Heart left ventricle (tissue), 16 donors: ENCODE measurements at regions of chr1 and their contacts with region 1.

Region 1: GRCh38 chr1:201828820-201829774 is at the start of gene IPO9:
- DNase-seq: peak; percentile 91 to 96 (median 94)
- ATAC-seq: peak; percentile 74 to 92 (median 90)
- H3K4me3 ChIP-seq: peak within 1 kb of the TSS; percentile 70 to 98 (median 88)
- H3K27ac ChIP-seq: peak within 1 kb of the TSS; percentile 73 to 96 (median 92)
- H3K4me1 ChIP-seq: peaks cover 0 to 57% (median 28%) of the 10 kb centered on the region in 12 donors
- H3K27me3 ChIP-seq: no peaks in the 10 kb centered on the region
- CTCF ChIP-seq: peak; percentile 94 to 100 (median 98)
- POLR2A ChIP-seq: peak in 1 of 2 donors; percentile 76
- total RNA-seq, gene IPO9: 12.1 to 35.4 (median 23.1) TPM

Region 2: GRCh38 chr1:201769966-201770365 is 59.1 kb before region 1 on chr1:
- intact Hi-C with region 1: no loop called
- DNase-seq: peak in 4 of 5 donors; percentile 61 to 80 (median 66)
- ATAC-seq: peak; percentile 77 to 94 (median 84)
- H3K4me3 ChIP-seq: no peak overlapping the region
- H3K27ac ChIP-seq: peak overlapping the region; percentile 14 to 74 (median 61)
- H3K4me1 ChIP-seq: peaks cover 0 to 88% (median 71%) of the 10 kb centered on the region in 12 donors
- H3K27me3 ChIP-seq: no peaks in the 10 kb centered on the region
- CTCF ChIP-seq: no peak
- POLR2A ChIP-seq: no peak

Region 3: DNA sequence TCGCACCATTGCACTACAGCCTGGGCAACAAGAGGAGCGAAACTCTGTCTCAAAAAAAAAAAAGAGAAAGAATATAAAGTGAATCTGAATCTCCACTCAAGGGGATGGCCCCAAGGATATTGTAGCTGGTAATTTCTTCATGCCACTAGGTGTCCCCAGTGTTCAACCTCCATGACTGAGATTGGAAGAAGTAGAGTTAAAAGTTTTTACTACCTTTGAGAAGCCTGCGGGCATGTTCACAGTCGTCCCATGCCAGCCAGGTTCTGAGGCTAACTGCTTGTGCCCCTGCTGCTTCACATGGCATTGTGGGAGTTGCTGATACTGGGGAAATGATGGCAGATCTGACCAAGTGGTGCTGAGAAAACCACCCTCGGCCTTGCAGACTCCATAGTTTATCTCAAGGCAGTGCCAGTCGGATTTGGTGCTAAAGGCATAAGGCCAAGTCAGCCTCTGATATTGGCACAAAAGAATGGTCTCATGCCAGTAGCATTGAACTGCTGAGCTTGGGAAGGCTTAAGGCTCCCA is 48.8 kb after region 1 on chr1:
- intact Hi-C with region 1: loop called in 1 of 10 experiments (anchors 5 kb)
- DNase-seq: peak in 1 of 5 donors; percentile 29
- ATAC-seq: peak; percentile 33 to 77 (median 62)
- H3K4me3 ChIP-seq: no peak overlapping the region
- H3K27ac ChIP-seq: peak overlapping the region in 9 of 12 donors; percentile 12 to 65 (median 33)
- H3K4me1 ChIP-seq: peaks cover 0 to 19% (median 6%) of the 10 kb centered on the region in 12 donors
- H3K27me3 ChIP-seq: no peaks in the 10 kb centered on the region
- CTCF ChIP-seq: peak; percentile 48 to 72 (median 59)
- POLR2A ChIP-seq: no peak